K562 (cell line): ENCODE measurements at regions of chr2 and their contacts with region 1.

Region 1: GRCh38 chr2:99180755-99181623 is at the starts of genes MITD1 and MRPL30:
- DNase-seq: peak; percentile 82 to 97 (median 86)
- ATAC-seq: peak; percentile 92
- H3K4me3 ChIP-seq: peak within 1 kb of the TSS; percentile 72
- H3K27ac ChIP-seq: peak within 1 kb of the TSS; percentile 88
- H3K4me1 ChIP-seq: peaks cover 0 to 14% of the 10 kb centered on the region in 2 experiments
- H3K27me3 ChIP-seq: no peaks in the 10 kb centered on the region
- CTCF ChIP-seq: peak in 1 of 3 experiments; percentile 13; a peak in 1 of 6 replicates
- EP300 ChIP-seq: peak; percentile 50; the same call in 1 of the 2 replicates
- POLR2A ChIP-seq: peak; percentile 93
- RAD21 ChIP-seq: no peak
- polyA plus RNA-seq, gene MITD1: 62.3 to 71.8 TPM
- polyA plus RNA-seq, gene MRPL30: 63.3 to 130 TPM

Region 2: GRCh38 chr2:99085421-99085820 is 95.6 kb before region 1 on chr2:
- CTCF ChIA-PET with region 1: interaction called, 3 read pairs
- POLR2A ChIA-PET with region 1: no interaction called
- in situ Hi-C with region 1: no loop called
- intact Hi-C with region 1: loop called (anchors 5 kb)
- DNase-seq: peak in 1 of 4 experiments; percentile 33
- ATAC-seq: peak; percentile 66; the same call in 2 of the 3 replicates
- H3K4me3 ChIP-seq: no peak overlapping the region
- H3K27ac ChIP-seq: no peak overlapping the region
- H3K4me1 ChIP-seq: no peaks in the 10 kb centered on the region
- H3K27me3 ChIP-seq: peaks cover 0 to 5% of the 10 kb centered on the region in 2 experiments; a peak in 1 of 5 replicates
- CTCF ChIP-seq: peak in 2 of 3 experiments; percentile 31 to 39; a peak in 4 of 6 replicates
- EP300 ChIP-seq: no peak
- POLR2A ChIP-seq: no peak
- RAD21 ChIP-seq: no peak

Region 3: DNA sequence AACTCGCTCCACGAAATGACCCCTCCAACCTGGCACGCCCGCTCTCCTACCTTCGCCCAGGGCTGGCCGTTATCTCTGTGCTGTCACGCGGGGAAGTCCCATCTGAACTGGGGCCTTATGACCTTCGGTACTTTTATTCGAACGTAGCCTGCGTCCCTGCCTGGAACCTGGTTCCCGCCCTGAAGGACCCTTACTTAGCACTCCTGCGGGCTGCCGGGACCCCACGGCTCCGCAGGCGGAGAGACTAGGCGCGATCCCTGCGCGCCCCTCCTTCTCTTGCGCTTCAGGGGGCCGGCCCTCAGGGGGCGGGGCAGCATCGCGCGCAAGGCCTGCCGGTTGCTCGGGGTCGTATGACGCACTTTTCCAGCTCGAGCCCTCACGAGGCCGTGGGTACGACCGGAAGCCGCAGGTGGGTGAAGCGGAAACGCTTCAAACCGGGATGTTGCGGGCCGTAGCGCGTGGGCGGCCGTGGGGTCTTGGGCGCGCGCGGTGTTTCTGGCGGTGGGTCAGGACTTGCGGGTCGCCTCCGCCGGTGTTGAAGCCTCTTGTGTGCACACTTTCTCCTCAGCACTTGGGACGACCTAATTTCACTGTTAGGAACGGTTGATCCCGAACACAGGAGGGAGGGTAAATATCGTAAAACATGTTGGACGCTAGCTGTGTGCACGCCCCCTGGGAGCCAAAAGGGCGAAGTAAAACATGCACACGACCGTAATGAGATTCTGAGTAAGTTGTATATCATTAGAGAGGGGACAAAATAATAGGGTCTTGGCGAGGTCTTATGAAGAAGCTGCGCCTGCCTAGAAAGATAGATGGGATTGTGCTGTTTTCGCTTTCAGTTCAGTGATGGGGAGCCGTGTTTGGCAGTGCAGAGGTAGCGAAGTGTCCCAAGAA is 26.1 kb before region 1 on chr2 and contains the starts of genes LIPT1 and TSGA10:
- CTCF ChIA-PET with region 1: interaction called, 3 read pairs
- POLR2A ChIA-PET with region 1: interaction called, 4 read pairs
- in situ Hi-C with region 1: no loop called
- intact Hi-C with region 1: loop called (anchors 1 kb)
- DNase-seq: peak; percentile 94 to 96 (median 96)
- ATAC-seq: peak; percentile 98
- H3K4me3 ChIP-seq: peak within 1 kb of the TSS; percentile 64
- H3K27ac ChIP-seq: peak within 1 kb of the TSS; percentile 94
- H3K4me1 ChIP-seq: peaks cover 11 to 21% of the 10 kb centered on the region in 2 experiments; a peak in 4 of 5 replicates
- H3K27me3 ChIP-seq: no peaks in the 10 kb centered on the region
- CTCF ChIP-seq: peak; percentile 11 to 38 (median 27); a peak in 2 of 6 replicates
- EP300 ChIP-seq: no peak
- POLR2A ChIP-seq: peak; percentile 96
- RAD21 ChIP-seq: 0 out of 4 replicates have a peak, but pooled peaks of 1 of the 2 experiments have one; percentile 12
- polyA plus RNA-seq, gene LIPT1: 16.3 to 18.3 TPM
- polyA plus RNA-seq, gene TSGA10: 2.1 to 3.5 TPM

Region 4: GRCh38 chr2:99255491-99256318 is 74.7 kb after region 1 on chr2 and contains the start of gene LYG2:
- CTCF ChIA-PET with region 1: no interaction called
- POLR2A ChIA-PET with region 1: no interaction called
- in situ Hi-C with region 1: no loop called
- intact Hi-C with region 1: no loop called
- DNase-seq: no peak
- ATAC-seq: no peak
- H3K4me3 ChIP-seq: no peak within 1 kb of the TSS
- H3K27ac ChIP-seq: no peak within 1 kb of the TSS
- H3K4me1 ChIP-seq: no peaks in the 10 kb centered on the region
- H3K27me3 ChIP-seq: peaks cover 0 to 9% of the 10 kb centered on the region in 2 experiments; a peak in 1 of 5 replicates
- CTCF ChIP-seq: no peak
- EP300 ChIP-seq: no peak
- POLR2A ChIP-seq: no peak
- RAD21 ChIP-seq: no peak
- polyA plus RNA-seq, gene LYG2: 0.15 to 0.21 TPM

Region 5: DNA sequence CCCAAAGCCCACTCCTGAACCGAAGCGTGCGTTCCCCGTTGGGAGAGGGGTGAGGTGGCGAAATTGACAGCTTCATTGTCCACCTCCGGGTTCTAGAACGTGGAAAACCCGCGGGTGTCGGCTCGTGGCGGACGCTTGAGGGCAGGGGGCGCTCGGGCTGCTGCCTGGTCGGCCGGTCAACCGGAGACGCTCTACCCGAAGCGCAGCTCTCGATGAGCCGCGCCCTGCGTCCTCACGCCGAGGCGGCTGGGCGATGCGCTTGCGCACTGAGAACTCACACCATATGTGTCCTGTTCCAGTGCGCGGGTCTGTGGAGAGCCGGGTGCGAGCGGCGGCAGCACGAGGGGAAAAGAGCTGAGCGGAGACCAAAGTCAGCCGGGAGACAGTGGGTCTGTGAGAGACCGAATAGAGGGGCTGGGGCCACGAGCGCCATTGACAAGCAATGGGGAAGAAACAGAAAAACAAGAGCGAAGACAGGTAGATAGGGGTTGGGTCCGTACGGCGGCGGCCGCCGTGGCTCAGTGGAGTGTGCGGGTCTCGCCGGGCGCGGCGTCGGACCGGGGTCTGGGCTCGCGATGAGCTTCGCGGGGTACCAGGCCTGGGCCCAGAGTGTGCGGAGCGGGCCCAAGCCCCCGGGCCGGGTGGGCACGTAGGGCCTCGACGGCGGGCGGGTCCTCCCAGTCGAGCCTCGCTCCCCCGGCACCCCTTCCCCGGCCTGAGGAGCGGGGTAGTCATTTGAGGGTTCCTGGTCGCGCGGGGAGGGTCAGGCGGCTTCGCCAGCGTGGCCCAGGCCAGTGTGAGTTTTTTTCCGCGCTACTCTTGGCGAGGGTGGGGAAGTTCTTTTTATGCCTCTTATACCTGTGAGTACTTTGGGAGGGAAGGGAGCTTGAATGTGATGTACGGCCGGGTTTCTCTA is 156.4 kb after region 1 on chr2 and contains the start of gene EIF5B:
- CTCF ChIA-PET with region 1: no interaction called
- POLR2A ChIA-PET with region 1: no interaction called
- in situ Hi-C with region 1: no loop called
- intact Hi-C with region 1: loop called (anchors 1 kb)
- DNase-seq: peak; percentile 86 to 99 (median 90)
- ATAC-seq: peak; percentile 89
- H3K4me3 ChIP-seq: peak within 1 kb of the TSS; percentile 61
- H3K27ac ChIP-seq: peak within 1 kb of the TSS; percentile 92
- H3K4me1 ChIP-seq: peaks cover 11 to 19% of the 10 kb centered on the region in 2 experiments; a peak in 4 of 5 replicates
- H3K27me3 ChIP-seq: no peaks in the 10 kb centered on the region
- CTCF ChIP-seq: peak; percentile 77 to 83 (median 80)
- EP300 ChIP-seq: peak; percentile 52; the same call in 1 of the 2 replicates
- POLR2A ChIP-seq: peak; percentile 96
- RAD21 ChIP-seq: peak; percentile 11 to 14; a peak in 1 of 4 replicates
- polyA plus RNA-seq, gene EIF5B: 26.5 to 33.2 TPM